Mammary epithelial cell (primary cell): ENCODE measurements at regions of chr10 and their contacts with region 1.

Region 1: DNA sequence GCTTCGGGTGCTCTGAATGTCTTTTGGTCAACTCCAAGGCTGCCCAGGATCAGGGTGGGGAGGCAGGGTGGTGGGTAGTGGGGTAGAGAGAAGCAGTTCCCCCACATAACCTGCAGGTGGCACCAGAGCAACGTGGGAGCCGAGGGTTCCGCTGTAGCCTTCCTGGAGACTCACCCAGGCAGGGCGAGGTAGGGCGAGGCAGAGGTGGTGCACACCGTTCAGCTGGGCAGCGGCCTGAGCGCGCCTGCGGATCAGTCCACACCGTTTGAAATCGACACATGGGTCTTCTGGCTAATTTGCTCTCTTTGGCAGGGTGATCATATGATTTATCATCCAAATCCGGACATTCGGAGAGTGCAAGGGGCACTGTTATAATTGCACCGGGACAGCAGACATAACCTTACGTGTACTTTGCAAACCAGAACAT is 41.4 kb upstream of the MAP3K8 start:
- DNase-seq: peak; percentile 50
- H3K4me3 ChIP-seq: no peak overlapping the region
- H3K27ac ChIP-seq: no peak overlapping the region
- H3K4me1 ChIP-seq: peaks cover 10% of the 10 kb centered on the region
- H3K27me3 ChIP-seq: no peaks in the 10 kb centered on the region
- CTCF ChIP-seq: peak; percentile 78 to 98

Region 2: DNA sequence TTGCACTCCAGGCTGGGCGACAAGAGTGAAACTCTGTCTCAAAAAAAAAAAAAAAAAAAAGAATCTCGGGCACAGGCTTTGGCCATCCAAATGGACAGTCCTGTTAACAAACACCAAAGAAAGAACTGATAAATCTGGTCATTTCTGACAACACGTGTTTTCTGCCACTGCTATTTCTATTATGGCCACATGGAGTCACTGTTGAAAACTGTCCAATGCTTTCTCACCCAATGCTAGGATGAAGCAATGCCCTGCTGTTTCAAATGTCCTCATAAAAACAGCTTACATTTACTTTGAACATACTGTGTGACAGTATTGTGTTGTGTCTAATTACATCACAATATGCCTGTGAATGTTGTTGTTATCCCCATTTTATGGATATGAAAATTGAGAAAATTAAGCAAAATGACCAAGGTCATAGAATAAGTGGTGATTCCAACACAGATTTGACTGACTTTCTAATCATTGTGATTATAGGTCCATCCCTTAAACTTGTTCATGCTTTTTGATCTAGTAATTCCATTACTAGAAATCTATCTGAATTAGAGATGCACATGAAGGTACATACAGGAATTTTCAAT is 21.5 kb after region 1 on chr10:
- CTCF ChIA-PET with region 1: no interaction called
- dilution Hi-C with region 1: no loop called
- in situ Hi-C with region 1: no loop called
- intact Hi-C with region 1: loop called (anchors 1 kb)
- DNase-seq: peak; percentile 48
- H3K4me3 ChIP-seq: no peak overlapping the region
- H3K27ac ChIP-seq: no peak overlapping the region
- H3K4me1 ChIP-seq: no peaks in the 10 kb centered on the region
- H3K27me3 ChIP-seq: no peaks in the 10 kb centered on the region
- CTCF ChIP-seq: peak; percentile 86 to 89

Region 3: GRCh38 chr10:30433730-30434272 is 41.2 kb after region 1 on chr10 and contains the start of gene MAP3K8:
- CTCF ChIA-PET with region 1: no interaction called
- dilution Hi-C with region 1: no loop called
- in situ Hi-C with region 1: no loop called
- intact Hi-C with region 1: no loop called
- DNase-seq: peak; percentile 82
- H3K4me3 ChIP-seq: peak within 1 kb of the TSS; percentile 68 to 84 (median 79)
- H3K27ac ChIP-seq: peak within 1 kb of the TSS; percentile 38
- H3K4me1 ChIP-seq: peaks cover 20% of the 10 kb centered on the region
- H3K27me3 ChIP-seq: no peaks in the 10 kb centered on the region
- CTCF ChIP-seq: no peak
- total RNA-seq, gene MAP3K8: 1.2 to 3.8 TPM

Region 4: GRCh38 chr10:30459283-30459682 is 66.7 kb after region 1 on chr10:
- CTCF ChIA-PET with region 1: no interaction called
- dilution Hi-C with region 1: no loop called
- in situ Hi-C with region 1: no loop called
- intact Hi-C with region 1: no loop called
- DNase-seq: no peak
- H3K4me3 ChIP-seq: no peak overlapping the region
- H3K27ac ChIP-seq: no peak overlapping the region
- H3K4me1 ChIP-seq: peaks cover 10% of the 10 kb centered on the region
- H3K27me3 ChIP-seq: no peaks in the 10 kb centered on the region
- CTCF ChIP-seq: no peak

Region 5: GRCh38 chr10:30534465-30535144 is 142.0 kb after region 1 on chr10:
- CTCF ChIA-PET with region 1: no interaction called
- dilution Hi-C with region 1: no loop called
- in situ Hi-C with region 1: loop called in 1 of 2 experiments (anchors 5 kb)
- intact Hi-C with region 1: loop called (anchors 1 kb)
- DNase-seq: peak; percentile 42
- H3K4me3 ChIP-seq: no peak overlapping the region
- H3K27ac ChIP-seq: no peak overlapping the region
- H3K4me1 ChIP-seq: peaks cover 5% of the 10 kb centered on the region
- H3K27me3 ChIP-seq: no peaks in the 10 kb centered on the region
- CTCF ChIP-seq: peak; percentile 80 to 89

Region 6: DNA sequence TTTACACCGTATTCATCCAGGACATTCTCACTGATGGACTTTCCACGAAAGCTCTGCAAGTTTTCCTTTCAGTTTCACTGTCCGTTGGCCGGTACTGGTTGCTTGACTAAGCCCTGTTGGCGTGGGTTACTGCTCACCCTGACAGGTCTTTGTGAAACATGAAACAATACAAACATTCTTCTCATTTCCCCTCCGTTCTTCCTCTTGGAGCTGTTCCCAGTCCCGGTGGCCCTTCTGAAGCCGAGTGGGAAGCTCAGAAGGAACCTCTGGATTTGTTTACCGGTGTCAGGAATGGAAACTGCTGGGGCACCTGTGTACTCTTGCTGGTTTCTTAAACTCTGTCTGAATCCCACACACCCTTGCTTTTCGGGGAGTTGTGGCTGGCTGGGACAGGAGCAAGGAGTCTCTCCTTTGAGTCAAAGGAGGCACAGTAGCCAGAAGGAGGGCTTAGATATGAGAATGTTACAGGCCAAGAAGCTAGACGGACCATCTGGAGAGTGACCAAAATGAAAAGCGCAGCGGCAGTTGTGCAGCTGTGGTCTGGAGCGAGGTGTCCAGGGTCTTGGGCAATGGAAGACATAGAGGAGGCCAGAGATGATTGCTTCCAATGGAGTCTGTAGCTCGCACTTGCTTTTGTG is 191.3 kb after region 1 on chr10:
- CTCF ChIA-PET with region 1: no interaction called
- dilution Hi-C with region 1: no loop called
- in situ Hi-C with region 1: loop called in 1 of 2 experiments (anchors 10 kb)
- intact Hi-C with region 1: no loop called
- DNase-seq: peak; percentile 94
- H3K4me3 ChIP-seq: peak overlapping the region; percentile 25 to 46 (median 27)
- H3K27ac ChIP-seq: peak overlapping the region; percentile 50
- H3K4me1 ChIP-seq: peaks cover 6% of the 10 kb centered on the region
- H3K27me3 ChIP-seq: no peaks in the 10 kb centered on the region
- CTCF ChIP-seq: no peak

Region 7: GRCh38 chr10:30591249-30591670 is 198.7 kb after region 1 on chr10:
- CTCF ChIA-PET with region 1: interaction called, 6 read pairs
- dilution Hi-C with region 1: no loop called
- in situ Hi-C with region 1: loop called in 1 of 2 experiments (anchors 10 kb)
- intact Hi-C with region 1: loop called (anchors 1 kb)
- DNase-seq: peak; percentile 42
- H3K4me3 ChIP-seq: no peak overlapping the region
- H3K27ac ChIP-seq: no peak overlapping the region
- H3K4me1 ChIP-seq: no peaks in the 10 kb centered on the region
- H3K27me3 ChIP-seq: peaks cover 5% of the 10 kb centered on the region
- CTCF ChIP-seq: peak; percentile 63 to 70

Region 8: GRCh38 chr10:30722956-30723620 is 330.5 kb after region 1 on chr10:
- CTCF ChIA-PET with region 1: no interaction called
- dilution Hi-C with region 1: no loop called
- in situ Hi-C with region 1: no loop called
- intact Hi-C with region 1: loop called (anchors 5 kb)
- DNase-seq: no peak
- H3K4me3 ChIP-seq: no peak overlapping the region
- H3K27ac ChIP-seq: no peak overlapping the region
- H3K4me1 ChIP-seq: peaks cover 3% of the 10 kb centered on the region
- H3K27me3 ChIP-seq: no peaks in the 10 kb centered on the region
- CTCF ChIP-seq: no peak